ENCODE measurements at regions of chr14 and their contacts with region 1.

Region 1: GRCh38 chr14:60862286-60862685 is 118.6 kb downstream of the TRMT5 start:
- DNase-seq: peak in 1 of 2 donors; percentile 41
- ATAC-seq: peak in 7 of 8 donors; percentile 55 to 94 (median 76)
- H3K4me3 ChIP-seq: no peak overlapping the region
- H3K27ac ChIP-seq: peak overlapping the region in 1 of 10 donors; percentile 17
- H3K4me1 ChIP-seq: peaks cover 0 to 39% (median 11%) of the 10 kb centered on the region in 9 donors
- H3K27me3 ChIP-seq: no peaks in the 10 kb centered on the region
- CTCF ChIP-seq: no peak

Region 2: DNA sequence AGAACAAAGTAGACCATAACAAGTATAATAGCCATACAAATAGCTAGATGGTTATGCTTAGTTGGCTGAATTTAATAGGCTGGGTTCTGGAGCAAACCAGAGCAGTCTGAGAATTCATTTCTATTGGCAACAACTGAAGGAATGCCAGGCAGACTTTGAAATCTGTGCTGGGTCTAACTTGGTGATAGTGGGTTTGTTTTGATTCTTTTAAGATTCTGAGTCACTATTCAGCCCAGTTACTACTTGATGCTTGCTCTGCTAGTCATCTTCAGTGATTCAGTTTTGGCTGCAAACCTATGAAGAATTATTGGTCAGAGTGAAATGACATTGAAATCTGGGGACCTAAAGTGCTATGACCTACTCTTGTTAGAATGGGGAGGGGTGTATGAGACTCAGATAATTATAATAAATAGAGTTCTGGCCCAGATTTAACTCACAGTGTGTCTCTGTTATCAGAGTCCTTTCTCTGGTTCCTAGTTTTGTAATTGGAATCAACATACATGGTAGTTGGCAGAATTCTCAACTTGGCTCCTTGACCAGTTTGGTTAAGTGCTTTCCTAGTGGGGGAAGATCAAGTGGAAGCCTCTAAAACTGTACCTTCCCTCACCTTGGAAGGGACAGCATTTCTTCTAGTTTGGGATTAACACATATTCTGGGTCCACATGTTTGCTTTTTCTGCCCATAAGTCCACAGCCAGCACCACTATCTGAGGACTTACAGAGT is 84.3 kb before region 1 on chr14:
- intact Hi-C with region 1: no loop called
- DNase-seq: peak in 1 of 2 donors; percentile 9
- ATAC-seq: peak in 2 of 8 donors; percentile 37 to 49
- H3K4me3 ChIP-seq: no peak overlapping the region
- H3K27ac ChIP-seq: peak overlapping the region in 1 of 10 donors; percentile 27
- H3K4me1 ChIP-seq: peaks cover 0 to 19% (median 7%) of the 10 kb centered on the region in 9 donors
- H3K27me3 ChIP-seq: no peaks in the 10 kb centered on the region
- CTCF ChIP-seq: no peak

Region 3: GRCh38 chr14:60951776-60952435 is 89.6 kb after region 1 on chr14:
- intact Hi-C with region 1: loop called in 1 of 10 experiments (anchors 10 kb)
- DNase-seq: no peak
- ATAC-seq: no peak
- H3K4me3 ChIP-seq: no peak overlapping the region
- H3K27ac ChIP-seq: peak overlapping the region in 2 of 10 donors; percentile 3 to 48
- H3K4me1 ChIP-seq: peaks cover 0 to 28% (median 0%) of the 10 kb centered on the region in 9 donors
- H3K27me3 ChIP-seq: no peaks in the 10 kb centered on the region
- CTCF ChIP-seq: no peak

Region 4: GRCh38 chr14:61019537-61019936 is 157.3 kb after region 1 on chr14:
- intact Hi-C with region 1: no loop called
- DNase-seq: no peak
- ATAC-seq: no peak
- H3K4me3 ChIP-seq: no peak overlapping the region
- H3K27ac ChIP-seq: no peak overlapping the region
- H3K4me1 ChIP-seq: no peaks in the 10 kb centered on the region
- H3K27me3 ChIP-seq: no peaks in the 10 kb centered on the region
- CTCF ChIP-seq: no peak

Measured in heart right ventricle (tissue), 16 donors.